ENCODE measurements at regions of chr10 and their contacts with region 1.

Region 1: GRCh38 chr10:72238392-72239175 is 22.5 kb upstream of the ASCC1 start:
- DNase-seq: peak; percentile 93 to 96
- ATAC-seq: peak; percentile 81 to 85
- H3K4me3 ChIP-seq: no peak overlapping the region
- H3K27ac ChIP-seq: peak overlapping the region; percentile 94 to 99 (median 98)
- H3K4me1 ChIP-seq: peaks cover 54 to 56% of the 10 kb centered on the region in 2 donors
- H3K27me3 ChIP-seq: no peaks in the 10 kb centered on the region
- CTCF ChIP-seq: no peak
- POLR2A ChIP-seq: peak; percentile 48 to 72

Region 2: GRCh38 chr10:72254813-72255568 is 16.4 kb after region 1 on chr10:
- in situ Hi-C with region 1: no loop called
- intact Hi-C with region 1: loop called (anchors 2 kb)
- DNase-seq: peak; percentile 97 to 98
- ATAC-seq: peak; percentile 81 to 87
- H3K4me3 ChIP-seq: peak overlapping the region in 2 of 4 donors; percentile 23 to 36
- H3K27ac ChIP-seq: peak overlapping the region; percentile 94 to 99 (median 98)
- H3K4me1 ChIP-seq: peaks cover 72 to 97% of the 10 kb centered on the region in 2 donors
- H3K27me3 ChIP-seq: no peaks in the 10 kb centered on the region
- CTCF ChIP-seq: no peak
- POLR2A ChIP-seq: peak; percentile 74 to 82

Region 3: GRCh38 chr10:72308320-72308987 is 69.9 kb after region 1 on chr10:
- in situ Hi-C with region 1: loop called in 1 of 4 experiments (anchors 10 kb)
- intact Hi-C with region 1: loop called (anchors 1 kb)
- DNase-seq: peak; percentile 64 to 75
- ATAC-seq: peak; percentile 38 to 46
- H3K4me3 ChIP-seq: no peak overlapping the region
- H3K27ac ChIP-seq: peak overlapping the region; percentile 93 to 97 (median 96)
- H3K4me1 ChIP-seq: peaks cover 50 to 65% of the 10 kb centered on the region in 2 donors
- H3K27me3 ChIP-seq: no peaks in the 10 kb centered on the region
- CTCF ChIP-seq: peak in 1 of 5 experiments; percentile 9
- POLR2A ChIP-seq: peak; percentile 39 to 43

Region 4: GRCh38 chr10:72490951-72491350 is 252.4 kb after region 1 on chr10:
- in situ Hi-C with region 1: no loop called
- intact Hi-C with region 1: no loop called
- DNase-seq: no peak
- ATAC-seq: no peak
- H3K4me3 ChIP-seq: no peak overlapping the region
- H3K27ac ChIP-seq: no peak overlapping the region
- H3K4me1 ChIP-seq: no peaks in the 10 kb centered on the region
- H3K27me3 ChIP-seq: no peaks in the 10 kb centered on the region
- CTCF ChIP-seq: no peak
- POLR2A ChIP-seq: no peak

Measured in gastrocnemius medialis (tissue), 4 donors.